ENCODE measurements at regions of chr18 and their contacts with region 1.

Region 1: DNA sequence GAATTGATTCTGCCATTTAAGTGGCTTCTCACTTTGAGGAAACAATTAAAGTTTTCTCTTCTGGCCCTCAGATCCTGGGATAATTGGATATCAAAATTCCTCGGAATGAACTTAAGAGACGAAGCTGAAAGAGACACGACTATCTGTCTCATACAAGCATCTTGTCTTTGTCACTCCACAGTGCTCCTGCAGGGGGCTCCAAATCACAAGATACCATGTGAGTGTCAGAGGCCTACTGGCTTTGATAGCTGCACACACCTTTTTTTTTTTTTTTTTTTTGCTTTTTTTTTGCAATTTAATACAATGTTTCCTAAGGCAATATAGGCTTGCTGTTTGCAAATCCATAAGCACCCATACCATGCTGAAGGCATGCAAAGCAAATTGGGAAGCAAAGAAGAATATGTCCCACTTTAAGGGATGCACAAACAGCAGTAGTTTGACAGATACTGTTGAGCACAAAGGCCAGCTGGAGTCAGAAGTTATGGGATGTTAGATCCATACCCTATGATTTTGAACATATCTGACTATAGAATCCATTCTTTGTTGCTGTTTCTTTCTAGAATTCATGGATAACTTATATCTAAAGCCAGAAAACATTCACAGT is 109.0 kb upstream of the CBLN2 start:
- DNase-seq: peak; percentile 48
- ATAC-seq: peak; percentile 86
- H3K4me3 ChIP-seq: no peak overlapping the region
- H3K27ac ChIP-seq: no peak overlapping the region
- H3K4me1 ChIP-seq: peaks cover 5% of the 10 kb centered on the region; the same call in 1 of the 2 replicates
- H3K27me3 ChIP-seq: no peaks in the 10 kb centered on the region
- CTCF ChIP-seq: peak; percentile 60
- EP300 ChIP-seq: no peak
- POLR2A ChIP-seq: no peak
- RAD21 ChIP-seq: no peak

Region 2: GRCh38 chr18:72672364-72673184 is 19.5 kb after region 1 on chr18:
- CTCF ChIA-PET with region 1: interaction called, 10 read pairs
- POLR2A ChIA-PET with region 1: no interaction called
- in situ Hi-C with region 1: no loop called
- intact Hi-C with region 1: loop called (anchors 1 kb)
- DNase-seq: peak; percentile 25
- ATAC-seq: peak; percentile 43; the same call in 1 of the 3 replicates
- H3K4me3 ChIP-seq: no peak overlapping the region
- H3K27ac ChIP-seq: no peak overlapping the region
- H3K4me1 ChIP-seq: no peaks in the 10 kb centered on the region
- H3K27me3 ChIP-seq: peaks cover 1 to 7% of the 10 kb centered on the region in 2 experiments; a peak in 1 of 5 replicates
- CTCF ChIP-seq: peak; percentile 53
- EP300 ChIP-seq: no peak
- POLR2A ChIP-seq: no peak
- RAD21 ChIP-seq: no peak

Region 3: DNA sequence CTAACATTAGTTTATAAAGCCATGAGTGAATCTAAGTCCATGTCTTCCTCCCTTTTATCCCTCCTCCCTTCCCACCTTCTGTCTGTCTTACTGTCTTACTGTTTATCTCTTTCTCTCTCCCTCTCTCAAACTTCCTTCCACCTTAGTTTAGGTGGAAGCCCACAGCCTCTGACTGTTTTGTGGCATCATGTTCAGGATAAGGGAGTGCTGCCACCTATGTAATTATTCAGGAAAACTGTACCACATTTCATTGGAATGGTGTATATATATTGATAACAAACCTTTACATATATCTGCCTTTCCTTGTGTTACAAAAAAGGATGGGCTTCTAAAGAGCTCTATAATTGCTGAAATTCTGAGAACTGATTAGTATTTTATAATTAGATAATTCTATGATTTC is 166.0 kb after region 1 on chr18:
- CTCF ChIA-PET with region 1: no interaction called
- POLR2A ChIA-PET with region 1: no interaction called
- in situ Hi-C with region 1: no loop called
- intact Hi-C with region 1: no loop called
- DNase-seq: no peak
- ATAC-seq: no peak
- H3K4me3 ChIP-seq: no peak overlapping the region
- H3K27ac ChIP-seq: no peak overlapping the region
- H3K4me1 ChIP-seq: no peaks in the 10 kb centered on the region
- H3K27me3 ChIP-seq: no peaks in the 10 kb centered on the region; a peak in 1 of 5 replicates
- CTCF ChIP-seq: no peak
- EP300 ChIP-seq: no peak
- POLR2A ChIP-seq: no peak
- RAD21 ChIP-seq: no peak

Measured in HepG2 (cell line).